ENCODE measurements at regions of chr15 and their contacts with region 1.

Region 1: DNA sequence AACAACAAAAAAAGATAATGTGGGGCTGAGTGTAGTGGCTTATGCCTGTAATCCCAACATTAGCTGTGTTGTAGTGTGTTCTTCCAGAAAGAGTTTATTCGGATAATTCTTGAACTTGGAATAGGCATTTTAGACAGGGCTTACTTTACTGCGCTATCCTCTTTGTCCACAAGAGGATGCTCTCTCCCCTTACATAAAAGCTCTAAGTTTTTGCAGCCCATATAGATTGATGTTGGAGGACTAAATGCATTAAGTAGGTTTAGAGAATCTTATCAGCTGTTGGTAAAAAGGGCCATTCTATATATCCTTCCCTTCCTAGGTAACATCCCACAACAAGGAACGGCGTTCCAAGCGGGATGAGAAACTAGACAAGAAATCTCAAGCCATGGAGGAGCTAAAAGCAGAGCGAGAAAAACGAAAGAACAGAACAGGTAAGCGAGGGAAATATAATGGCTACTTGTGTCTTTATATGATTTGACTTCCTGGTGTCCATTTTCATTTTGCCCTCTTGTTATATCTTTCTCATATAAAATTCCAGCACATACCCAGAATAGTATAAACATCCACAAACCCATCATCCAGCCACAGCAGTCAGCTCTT is 27.8 kb upstream of the ITPKA start:
- DNase-seq: peak; percentile 34
- H3K4me3 ChIP-seq: no peak overlapping the region
- H3K27ac ChIP-seq: no peak overlapping the region
- H3K27me3 ChIP-seq: no peaks in the 10 kb centered on the region
- CTCF ChIP-seq: peak; percentile 100

Region 2: DNA sequence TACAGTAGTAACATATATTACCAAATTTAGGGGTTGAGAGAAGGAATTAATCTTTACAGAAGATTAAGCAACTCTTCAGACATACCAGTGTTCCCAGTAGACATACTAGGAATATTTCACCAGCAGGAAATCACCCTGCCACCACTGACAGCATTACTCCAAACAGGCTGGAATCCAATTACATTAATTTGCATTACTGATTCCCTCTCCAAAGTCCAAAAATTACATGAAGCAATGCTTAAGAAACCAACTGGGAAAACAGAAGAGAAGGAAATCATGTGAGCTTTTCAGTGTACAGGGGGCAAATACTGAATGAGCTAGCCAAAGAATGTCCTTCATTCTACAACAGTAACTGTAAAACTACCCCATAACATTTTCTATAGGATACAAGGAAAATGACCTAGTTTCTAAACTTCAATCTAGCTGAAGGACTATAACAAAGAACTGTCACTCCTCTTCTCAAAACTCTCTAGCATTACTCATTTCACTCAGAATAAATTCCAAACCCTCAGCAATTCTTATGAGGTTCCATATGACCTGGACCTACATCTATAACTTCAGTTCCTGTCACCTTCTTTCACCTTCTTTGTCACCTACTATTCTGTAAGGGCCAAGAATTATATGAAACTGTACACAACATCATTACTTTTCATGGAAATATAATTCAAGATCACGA is 422.5 kb before region 1 on chr15:
- CTCF ChIA-PET with region 1: no interaction called
- POLR2A ChIA-PET with region 1: no interaction called
- DNase-seq: peak; percentile 15
- H3K4me3 ChIP-seq: no peak overlapping the region
- H3K27ac ChIP-seq: no peak overlapping the region
- H3K27me3 ChIP-seq: no peaks in the 10 kb centered on the region
- CTCF ChIP-seq: no peak

Region 3: GRCh38 chr15:41476416-41477048 is 10.6 kb after region 1 on chr15:
- CTCF ChIA-PET with region 1: interaction called, 21 read pairs
- POLR2A ChIA-PET with region 1: no interaction called
- DNase-seq: no peak
- H3K4me3 ChIP-seq: no peak overlapping the region
- H3K27ac ChIP-seq: peak overlapping the region; percentile 89
- H3K27me3 ChIP-seq: no peaks in the 10 kb centered on the region
- CTCF ChIP-seq: no peak

Region 4: DNA sequence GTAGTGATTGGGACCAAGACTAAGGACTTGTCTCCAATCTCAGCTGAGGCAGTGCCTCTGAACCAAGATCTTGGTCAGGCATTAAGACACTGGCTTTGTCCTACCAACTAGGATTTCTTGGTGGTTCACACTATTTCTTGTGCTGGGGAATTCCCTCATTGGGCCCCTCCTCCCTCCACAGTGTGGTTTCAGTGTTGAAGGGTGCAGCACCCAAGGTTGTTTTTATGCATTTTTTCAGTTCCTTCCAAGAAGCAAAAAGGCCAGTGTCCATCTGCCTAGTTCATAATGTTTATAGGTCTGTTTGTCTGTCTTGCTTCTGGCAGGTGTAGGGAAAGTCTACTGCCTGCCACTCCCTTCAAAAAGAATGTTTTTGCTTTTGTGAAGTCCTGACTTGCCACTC is 17.2 kb after region 1 on chr15:
- CTCF ChIA-PET with region 1: interaction called, 21 read pairs
- POLR2A ChIA-PET with region 1: no interaction called
- DNase-seq: no peak
- H3K4me3 ChIP-seq: no peak overlapping the region
- H3K27ac ChIP-seq: no peak overlapping the region
- H3K27me3 ChIP-seq: no peaks in the 10 kb centered on the region
- CTCF ChIP-seq: no peak

Region 5: GRCh38 chr15:41585127-41586047 is 119.5 kb after region 1 on chr15:
- CTCF ChIA-PET with region 1: interaction called, 16 read pairs
- POLR2A ChIA-PET with region 1: no interaction called
- DNase-seq: no peak
- H3K4me3 ChIP-seq: peak overlapping the region; percentile 46
- H3K27ac ChIP-seq: peak overlapping the region; percentile 52
- H3K27me3 ChIP-seq: no peaks in the 10 kb centered on the region
- CTCF ChIP-seq: peak; percentile 60

Region 6: GRCh38 chr15:41603941-41604911 is 138.3 kb after region 1 on chr15:
- CTCF ChIA-PET with region 1: interaction called, 13 read pairs
- POLR2A ChIA-PET with region 1: no interaction called
- DNase-seq: no peak
- H3K4me3 ChIP-seq: peak overlapping the region; percentile 52
- H3K27ac ChIP-seq: peak overlapping the region; percentile 78
- H3K27me3 ChIP-seq: no peaks in the 10 kb centered on the region
- CTCF ChIP-seq: peak; percentile 90

Region 7: DNA sequence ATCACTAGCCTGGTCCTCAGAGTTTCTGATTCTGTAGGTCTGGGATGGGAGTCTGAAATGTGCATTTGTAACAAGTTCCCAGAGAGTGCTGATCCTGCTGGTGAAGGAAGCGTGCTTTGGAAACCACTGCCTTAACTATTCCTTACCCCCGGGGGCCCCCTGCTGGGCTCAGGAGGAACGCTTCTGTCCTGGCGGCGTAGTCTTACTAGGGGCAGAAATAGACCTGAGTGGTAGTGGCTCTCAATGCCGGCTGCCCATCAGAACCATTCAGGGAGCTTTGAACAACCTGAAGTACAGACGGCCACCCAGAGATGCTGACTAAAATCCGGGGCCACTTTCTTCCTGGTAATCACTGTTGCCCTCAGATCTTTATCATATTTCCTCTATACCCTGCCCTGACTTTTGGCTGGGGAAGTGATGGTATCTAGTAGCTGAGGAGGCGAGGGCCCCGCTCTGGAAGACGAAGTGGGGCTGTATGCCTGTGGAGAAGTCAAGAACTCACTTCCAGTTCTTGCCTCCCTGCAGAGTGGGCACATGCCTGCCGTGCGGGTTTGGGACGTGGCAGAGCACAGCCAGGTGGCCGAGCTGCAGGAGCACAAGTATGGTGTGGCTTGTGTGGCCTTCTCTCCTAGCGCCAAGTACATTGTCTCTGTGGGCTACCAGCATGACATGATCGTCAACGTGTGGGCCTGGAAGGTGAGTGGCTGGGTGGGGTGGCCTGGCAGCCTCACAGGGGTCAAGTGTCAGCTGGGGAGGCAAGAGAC is 345.7 kb after region 1 on chr15:
- CTCF ChIA-PET with region 1: interaction called, 20 read pairs
- POLR2A ChIA-PET with region 1: no interaction called
- DNase-seq: peak; percentile 71
- H3K4me3 ChIP-seq: no peak overlapping the region
- H3K27ac ChIP-seq: no peak overlapping the region
- H3K27me3 ChIP-seq: no peaks in the 10 kb centered on the region
- CTCF ChIP-seq: peak; percentile 97

Measured in AG04450 (cell line).